Esophagus muscularis mucosa (tissue), 4 donors: ENCODE measurements at regions of chr7 and their contacts with region 1.

Region 1: GRCh38 chr7:33062782-33063443 is 337 bp upstream of the NT5C3A start:
- DNase-seq: peak; percentile 98
- H3K4me3 ChIP-seq: peak overlapping the region; percentile 82 to 94 (median 84)
- H3K27ac ChIP-seq: peak overlapping the region; percentile 92 to 94 (median 93)
- H3K4me1 ChIP-seq: peaks cover 26 to 43% (median 32%) of the 10 kb centered on the region in 4 donors
- H3K27me3 ChIP-seq: no peaks in the 10 kb centered on the region
- CTCF ChIP-seq: peak in 1 of 3 experiments; percentile 5
- EP300 ChIP-seq: no peak
- POLR2A ChIP-seq: no peak

Region 2: GRCh38 chr7:32957326-32958045 is 105.4 kb before region 1 on chr7 and contains the start of gene FKBP9:
- intact Hi-C with region 1: loop called (anchors 5 kb)
- DNase-seq: peak; percentile 95
- H3K4me3 ChIP-seq: peak within 1 kb of the TSS; percentile 79 to 97 (median 96)
- H3K27ac ChIP-seq: peak within 1 kb of the TSS; percentile 91 to 96 (median 92)
- H3K4me1 ChIP-seq: peaks cover 17 to 30% (median 26%) of the 10 kb centered on the region in 4 donors
- H3K27me3 ChIP-seq: no peaks in the 10 kb centered on the region
- CTCF ChIP-seq: peak in 1 of 3 experiments; percentile 10
- EP300 ChIP-seq: no peak
- POLR2A ChIP-seq: peak; percentile 21
- total RNA-seq, gene FKBP9: 119 to 123 (median 122) TPM

Region 3: GRCh38 chr7:33050535-33051318 is 12.2 kb before region 1 on chr7:
- intact Hi-C with region 1: no loop called
- DNase-seq: no peak
- H3K4me3 ChIP-seq: peak overlapping the region; percentile 4 to 31 (median 19)
- H3K27ac ChIP-seq: peak overlapping the region; percentile 48 to 62 (median 58)
- H3K4me1 ChIP-seq: peaks cover 11 to 59% (median 45%) of the 10 kb centered on the region in 4 donors
- H3K27me3 ChIP-seq: no peaks in the 10 kb centered on the region
- CTCF ChIP-seq: peak; percentile 54 to 69 (median 62)
- EP300 ChIP-seq: no peak
- POLR2A ChIP-seq: no peak